ENCODE measurements at regions of chr12 and their contacts with region 1.

Region 1: GRCh38 chr12:7219599-7220243 is 30.2 kb downstream of the PEX5 start:
- DNase-seq: peak; percentile 49 to 65
- H3K4me3 ChIP-seq: no peak overlapping the region
- H3K27ac ChIP-seq: no peak overlapping the region
- H3K4me1 ChIP-seq: no peaks in the 10 kb centered on the region
- H3K27me3 ChIP-seq: no peaks in the 10 kb centered on the region
- CTCF ChIP-seq: peak; percentile 56 to 86 (median 81)
- POLR2A ChIP-seq: no peak

Region 2: DNA sequence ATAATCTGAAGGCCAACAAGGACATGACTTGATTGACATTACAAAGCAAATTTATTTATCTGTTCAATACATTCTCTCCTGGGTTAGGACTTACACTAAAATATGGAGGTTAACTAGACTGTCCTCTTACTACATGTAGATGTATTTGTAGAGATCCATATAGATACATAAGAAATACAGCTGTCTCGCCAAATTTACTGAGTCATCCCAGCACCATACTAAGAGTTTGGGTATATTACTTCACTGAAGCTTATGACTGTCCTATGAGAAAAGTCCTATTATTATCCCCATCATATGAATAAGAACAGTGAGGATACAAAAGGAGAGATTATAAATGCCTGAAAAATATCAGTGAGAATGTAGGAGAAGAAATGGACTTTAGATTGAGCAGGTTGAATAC is 39.3 kb after region 1 on chr12:
- intact Hi-C with region 1: no loop called
- DNase-seq: no peak
- H3K4me3 ChIP-seq: no peak overlapping the region
- H3K27ac ChIP-seq: no peak overlapping the region
- H3K4me1 ChIP-seq: no peaks in the 10 kb centered on the region
- H3K27me3 ChIP-seq: no peaks in the 10 kb centered on the region
- CTCF ChIP-seq: no peak
- POLR2A ChIP-seq: no peak

Region 3: DNA sequence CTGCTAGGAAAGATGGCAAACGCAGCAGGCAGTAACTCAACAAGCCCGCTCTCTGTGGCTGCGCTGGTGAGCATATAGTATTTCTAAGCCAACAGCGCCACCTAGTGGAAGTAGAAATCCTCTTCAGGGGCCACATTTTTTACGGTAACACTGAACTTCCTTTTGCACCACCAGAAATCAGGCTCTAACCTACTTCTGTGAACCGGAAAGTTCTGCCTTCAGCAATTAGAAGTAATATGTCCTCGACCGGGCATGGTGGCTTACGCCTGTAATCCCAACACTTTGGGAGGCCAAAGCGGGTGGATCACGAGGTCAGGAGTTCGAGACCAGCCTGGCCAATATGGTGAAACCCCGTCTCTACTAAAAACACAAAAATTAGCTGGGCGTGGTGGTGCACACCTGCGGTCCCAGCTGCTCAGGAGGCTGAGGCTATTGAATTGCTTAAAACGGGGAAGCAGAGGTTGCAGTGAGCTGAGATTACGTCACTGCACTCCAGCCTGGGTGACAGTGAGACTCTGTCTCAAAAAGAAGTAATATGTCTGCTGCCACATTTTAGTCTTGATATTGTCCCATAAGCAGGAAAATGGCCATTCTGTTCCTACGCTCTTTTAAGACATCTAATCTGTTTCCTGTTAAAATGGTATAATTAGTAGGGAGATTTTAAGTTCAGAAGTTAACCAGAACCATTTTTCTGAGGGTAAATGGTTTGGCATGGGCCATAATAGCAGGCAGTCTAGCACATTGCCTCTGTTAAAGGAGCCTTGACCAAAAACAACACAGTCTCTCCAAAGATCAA is 419.2 kb after region 1 on chr12:
- intact Hi-C with region 1: loop called (anchors 10 kb)
- DNase-seq: peak; percentile 60 to 75
- H3K4me3 ChIP-seq: peak overlapping the region in 2 of 3 donors; percentile 31 to 55
- H3K27ac ChIP-seq: peak overlapping the region in 1 of 2 donors; percentile 30
- H3K4me1 ChIP-seq: no peaks in the 10 kb centered on the region
- H3K27me3 ChIP-seq: no peaks in the 10 kb centered on the region
- CTCF ChIP-seq: peak; percentile 93 to 96 (median 94)
- POLR2A ChIP-seq: no peak

Measured in breast epithelium (tissue), 4 donors.